BJ (cell line): ENCODE measurements at regions of chr19 and their contacts with region 1.

Region 1: DNA sequence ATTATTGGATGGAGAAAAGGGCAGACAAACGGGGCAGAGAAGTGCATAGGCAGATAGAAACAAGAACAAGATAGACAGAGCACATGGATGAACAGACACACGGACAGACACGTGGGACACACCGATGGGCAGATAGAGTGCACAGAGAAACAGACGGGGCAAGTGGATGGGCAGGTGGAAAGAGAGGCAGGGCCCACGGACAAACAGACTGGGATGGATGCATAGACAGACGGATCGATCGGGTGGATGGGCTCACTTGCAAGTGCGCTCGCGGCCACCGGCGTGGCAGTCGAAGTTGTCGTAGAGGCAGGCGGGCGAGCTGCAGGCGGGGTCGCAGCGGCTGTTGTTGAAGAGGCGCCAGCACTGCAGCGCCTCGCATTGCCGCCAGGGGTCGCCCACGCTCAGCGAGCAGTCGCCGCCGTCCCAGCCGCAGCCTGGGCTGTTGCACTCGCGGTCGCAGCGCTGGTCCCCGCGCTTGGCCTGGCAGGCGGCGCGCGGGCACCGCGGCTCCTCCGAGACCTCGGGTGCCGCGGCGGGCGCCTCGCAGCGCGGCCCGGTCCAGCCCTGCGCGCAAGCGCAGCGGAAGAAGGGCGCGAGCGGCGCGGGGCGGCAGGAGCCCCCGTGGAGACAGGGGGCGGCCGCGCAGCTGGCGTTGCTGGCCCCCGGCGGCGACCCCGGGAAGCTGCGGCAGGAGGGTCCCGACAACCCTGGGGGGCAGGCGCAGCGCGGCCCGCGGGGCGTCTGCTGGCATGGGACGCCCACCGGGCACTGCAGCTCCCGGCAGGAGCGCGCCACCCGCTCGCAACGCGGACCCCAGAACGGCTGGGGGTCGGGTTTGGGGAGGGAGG is 23.3 kb downstream of the NOTCH3 start:
- DNase-seq: peak; percentile 6
- H3K4me3 ChIP-seq: 0 out of 2 replicates have a peak overlapping the region, but pooled peaks have one; percentile 7
- H3K27me3 ChIP-seq: no peaks in the 10 kb centered on the region
- CTCF ChIP-seq: peak; percentile 74

Region 2: DNA sequence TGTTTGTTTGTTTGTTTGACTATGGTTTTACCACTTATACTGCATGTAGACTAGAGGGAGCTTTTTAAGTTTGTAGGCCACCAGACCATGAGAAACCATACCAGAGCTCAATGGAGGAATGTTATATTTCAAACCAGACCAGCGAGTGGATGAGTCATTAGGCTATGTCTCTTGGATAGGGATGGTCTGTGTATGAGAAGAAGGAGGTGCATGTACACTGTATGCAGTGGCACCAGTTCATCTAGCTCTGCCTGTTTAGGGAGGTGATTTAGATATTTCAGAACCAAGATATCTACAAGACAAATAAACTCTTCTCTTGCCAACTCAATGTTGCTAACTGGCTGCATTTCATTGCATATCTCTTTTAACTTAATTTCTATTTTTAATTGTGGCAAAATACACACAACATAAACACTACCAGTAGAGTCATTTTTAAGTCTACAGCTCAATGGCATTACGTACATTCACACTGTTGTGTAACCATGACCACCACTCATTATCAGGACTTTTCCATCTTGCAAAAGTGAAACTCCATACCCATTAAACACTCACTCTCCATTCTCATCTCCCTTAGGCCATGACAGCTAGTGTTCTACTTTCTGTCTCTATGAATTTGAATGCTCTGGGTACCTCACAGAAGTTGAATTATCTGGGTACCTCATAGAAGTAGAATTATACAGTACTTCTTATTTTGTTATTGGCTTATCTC is 41.1 kb before region 1 on chr19:
- CTCF ChIA-PET with region 1: no interaction called
- POLR2A ChIA-PET with region 1: no interaction called
- DNase-seq: no peak
- H3K4me3 ChIP-seq: no peak overlapping the region
- H3K27me3 ChIP-seq: no peaks in the 10 kb centered on the region
- CTCF ChIP-seq: no peak

Region 3: GRCh38 chr19:15166700-15167099 is 10.8 kb before region 1 on chr19:
- CTCF ChIA-PET with region 1: interaction called, 20 read pairs
- POLR2A ChIA-PET with region 1: no interaction called
- DNase-seq: no peak
- H3K4me3 ChIP-seq: no peak overlapping the region
- H3K27me3 ChIP-seq: no peaks in the 10 kb centered on the region
- CTCF ChIP-seq: no peak

Region 4: GRCh38 chr19:15194938-15195337 is 17.4 kb after region 1 on chr19:
- CTCF ChIA-PET with region 1: interaction called, 11 read pairs
- POLR2A ChIA-PET with region 1: no interaction called
- DNase-seq: peak; percentile 19
- H3K4me3 ChIP-seq: peak overlapping the region; percentile 47; the same call in 1 of the 2 replicates
- H3K27me3 ChIP-seq: no peaks in the 10 kb centered on the region
- CTCF ChIP-seq: no peak

Region 5: DNA sequence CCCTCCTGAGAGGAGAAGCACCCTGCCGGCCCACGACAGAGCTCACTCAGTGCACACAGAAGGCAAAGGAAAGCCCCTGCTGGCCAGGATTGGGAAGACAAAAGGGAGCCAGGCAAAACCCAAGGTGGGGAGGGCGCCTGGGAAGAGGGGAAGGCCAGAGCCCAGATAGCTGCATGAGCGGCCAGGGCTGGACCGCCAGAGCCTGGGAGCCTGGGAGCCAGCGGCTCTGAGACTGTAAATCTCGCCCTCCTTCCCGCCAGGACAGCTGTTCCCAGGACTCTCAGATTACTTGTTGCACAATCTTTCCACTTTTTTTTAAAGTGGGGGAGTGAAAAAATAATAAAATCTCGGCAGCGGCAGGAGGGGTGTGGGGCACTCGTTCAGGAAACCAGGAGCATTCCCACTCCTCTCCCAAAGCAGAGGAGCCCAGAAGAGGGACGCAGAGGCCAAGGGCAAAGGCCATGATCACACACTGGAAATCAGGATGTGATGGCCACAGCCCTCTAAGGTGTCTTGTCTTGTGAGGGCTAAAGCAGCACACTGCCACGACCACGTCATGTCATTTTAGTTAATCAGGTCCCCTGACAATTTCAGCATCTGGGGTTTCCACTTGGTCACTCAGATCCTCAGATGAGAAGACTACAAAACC is 74.4 kb after region 1 on chr19:
- CTCF ChIA-PET with region 1: interaction called, 21 read pairs
- POLR2A ChIA-PET with region 1: no interaction called
- DNase-seq: peak; percentile 75
- H3K4me3 ChIP-seq: no peak overlapping the region
- H3K27me3 ChIP-seq: no peaks in the 10 kb centered on the region
- CTCF ChIP-seq: peak; percentile 60

Region 6: GRCh38 chr19:15418588-15419412 is 241.3 kb after region 1 on chr19 and contains the start of gene AKAP8L:
- CTCF ChIA-PET with region 1: interaction called, 11 read pairs
- POLR2A ChIA-PET with region 1: no interaction called
- DNase-seq: peak; percentile 99
- H3K4me3 ChIP-seq: peak within 1 kb of the TSS; percentile 99
- H3K27me3 ChIP-seq: no peaks in the 10 kb centered on the region
- CTCF ChIP-seq: peak; percentile 77
- polyA plus RNA-seq, gene AKAP8L: 25.8 and 27.5 TPM in 2 replicates